Common myeloid progenitor, CD34-positive (primary cell): ENCODE measurements at regions of chr1 and their contacts with region 1.

Region 1: DNA sequence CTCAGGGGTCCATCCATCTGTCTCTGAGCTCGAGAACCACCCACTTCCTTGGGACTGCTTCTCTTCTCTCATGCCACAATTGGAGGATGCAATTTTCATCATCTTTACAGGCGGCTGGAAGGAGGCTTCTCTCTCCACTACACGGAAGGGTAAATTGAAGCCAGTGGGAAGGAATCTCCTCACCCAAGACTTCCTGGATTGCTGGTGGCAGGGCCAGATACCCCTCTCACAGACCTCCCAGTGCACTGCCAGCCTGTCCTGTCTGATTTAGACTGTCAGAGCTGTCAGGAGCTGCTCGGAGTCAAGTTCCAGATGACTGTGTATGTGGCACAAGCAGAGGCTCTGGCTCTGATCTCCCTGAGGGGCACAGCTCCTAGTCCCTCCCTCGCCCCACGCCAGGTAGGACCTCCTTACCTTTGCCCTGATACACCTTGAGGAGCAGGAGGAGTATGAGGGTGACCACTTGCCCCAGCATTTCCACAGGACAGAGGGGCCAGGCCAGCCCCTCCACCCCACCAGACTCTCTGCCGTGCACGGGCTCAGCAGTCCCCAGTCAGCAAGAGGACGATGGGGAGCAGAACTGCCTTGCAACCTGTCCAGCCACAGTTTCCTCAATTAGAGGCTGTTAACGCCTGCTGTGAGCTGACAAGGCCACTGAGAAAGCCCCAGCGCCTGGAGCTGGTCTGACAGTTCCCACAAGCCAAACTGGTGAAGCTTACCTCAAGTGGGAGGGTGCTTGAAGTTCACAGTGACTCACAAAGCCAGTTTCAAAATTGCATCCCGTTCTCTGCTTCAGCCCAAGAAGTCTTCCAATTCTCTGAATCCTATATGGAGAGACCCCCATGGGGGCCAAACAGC is at the start of gene CD244:
- DNase-seq: peak; percentile 89 to 99 (median 98)
- H3K4me3 ChIP-seq: peak within 1 kb of the TSS; percentile 19 to 74 (median 64)
- H3K27ac ChIP-seq: peak within 1 kb of the TSS; percentile 71 to 89
- H3K4me1 ChIP-seq: peaks cover 22 to 72% (median 68%) of the 10 kb centered on the region in 4 experiments
- H3K27me3 ChIP-seq: no peaks in the 10 kb centered on the region

Region 2: DNA sequence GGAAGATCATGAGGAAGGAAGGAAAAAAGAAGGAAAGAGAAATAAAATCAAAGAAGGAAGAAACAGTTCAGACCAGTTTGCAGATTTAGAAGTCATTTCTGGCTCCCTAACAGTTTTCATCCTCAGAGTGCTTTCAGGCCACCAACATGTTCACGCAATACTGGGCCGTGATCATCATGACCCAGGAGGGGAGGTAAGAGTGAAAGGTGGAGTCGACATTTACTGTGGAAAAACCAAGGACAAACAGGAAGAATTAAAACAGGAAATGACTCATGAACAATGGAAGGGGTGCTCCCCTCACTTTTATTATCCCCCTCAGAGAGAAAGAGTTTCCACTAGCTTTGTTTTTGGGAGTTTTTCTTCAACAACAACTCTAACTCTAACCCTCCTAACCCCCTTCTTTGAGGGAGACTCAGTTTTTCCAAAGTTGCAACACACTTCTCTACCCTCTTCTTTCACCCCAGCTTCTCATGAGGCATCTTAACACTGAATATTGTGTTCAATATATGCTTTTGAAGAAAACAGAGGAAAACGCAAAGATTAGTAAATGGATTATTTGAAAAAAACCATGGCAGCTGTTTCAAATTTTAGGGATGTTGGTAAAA is 401.6 kb before region 1 on chr1:
- CTCF ChIA-PET with region 1: no interaction called
- POLR2A ChIA-PET with region 1: no interaction called
- DNase-seq: peak in 1 of 3 donors; percentile 15
- H3K4me3 ChIP-seq: peak overlapping the region in 1 of 7 experiments; percentile 3
- H3K27ac ChIP-seq: no peak overlapping the region
- H3K4me1 ChIP-seq: peaks cover 0 to 11% (median 6%) of the 10 kb centered on the region in 4 experiments
- H3K27me3 ChIP-seq: no peaks in the 10 kb centered on the region

Region 3: DNA sequence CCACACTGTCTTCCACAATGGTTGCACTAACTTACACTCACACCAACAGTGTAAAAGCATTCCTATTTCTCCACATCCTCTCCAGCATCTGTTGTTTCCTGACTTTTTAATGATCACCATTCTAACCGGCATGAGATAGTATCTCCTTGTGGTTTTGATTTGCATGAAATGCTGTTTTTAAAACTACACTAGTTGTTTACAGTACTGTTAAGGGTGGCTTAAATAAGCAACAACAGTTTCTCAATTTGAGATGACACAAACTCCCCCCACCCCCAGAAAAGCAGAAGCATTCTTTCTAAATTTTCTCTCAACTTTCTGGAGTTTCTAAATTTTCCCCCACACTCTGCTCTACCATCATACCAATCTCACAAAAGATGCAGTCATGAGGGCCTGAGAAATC is 130.4 kb before region 1 on chr1:
- CTCF ChIA-PET with region 1: no interaction called
- POLR2A ChIA-PET with region 1: no interaction called
- DNase-seq: no peak
- H3K4me3 ChIP-seq: no peak overlapping the region
- H3K27ac ChIP-seq: no peak overlapping the region
- H3K4me1 ChIP-seq: peaks cover 0 to 4% (median 1%) of the 10 kb centered on the region in 4 experiments
- H3K27me3 ChIP-seq: no peaks in the 10 kb centered on the region

Region 4: DNA sequence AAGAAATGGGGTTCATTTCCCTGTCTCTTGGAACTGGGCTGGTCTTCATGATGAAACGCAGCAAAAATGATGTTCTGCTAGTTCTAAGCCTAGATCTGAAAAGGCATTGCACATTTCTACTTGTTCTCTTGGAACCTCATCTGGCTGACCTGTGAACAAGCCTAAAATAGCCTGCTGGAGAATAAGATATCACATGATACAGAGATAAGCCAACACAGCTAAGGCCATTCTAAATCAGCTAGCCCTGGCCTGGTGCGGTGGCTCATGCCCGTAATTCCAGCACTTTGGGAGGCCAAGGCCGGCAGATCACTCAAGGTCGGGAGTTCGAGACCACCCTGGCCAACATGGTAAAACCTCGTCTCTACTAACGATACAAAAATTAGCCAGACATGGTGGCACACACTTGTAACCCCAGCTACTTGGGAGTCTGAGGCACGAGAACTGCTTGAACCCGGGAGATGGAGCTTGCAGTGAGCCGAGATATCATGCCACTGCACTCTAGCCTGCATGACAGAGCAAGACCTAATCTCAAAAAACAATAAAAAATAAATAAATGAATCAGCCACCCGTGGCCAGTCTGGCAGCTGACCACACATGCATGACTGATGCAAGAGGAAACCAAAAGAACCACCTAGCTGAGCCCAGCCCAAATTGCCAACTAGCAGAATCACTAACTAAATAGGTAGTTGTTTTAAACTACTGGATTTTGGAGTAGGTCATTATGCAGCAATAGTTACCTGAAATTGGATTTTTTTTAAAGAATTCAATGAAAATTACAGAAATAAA is 17.8 kb before region 1 on chr1:
- CTCF ChIA-PET with region 1: interaction called, 385 read pairs
- POLR2A ChIA-PET with region 1: interaction called, 16 read pairs
- DNase-seq: peak; percentile 66 to 86 (median 83)
- H3K4me3 ChIP-seq: peak overlapping the region in 2 of 7 experiments; percentile 4 to 22
- H3K27ac ChIP-seq: peak overlapping the region in 1 of 2 experiments; percentile 46
- H3K4me1 ChIP-seq: peaks cover 33 to 68% (median 57%) of the 10 kb centered on the region in 4 experiments
- H3K27me3 ChIP-seq: no peaks in the 10 kb centered on the region

Region 5: DNA sequence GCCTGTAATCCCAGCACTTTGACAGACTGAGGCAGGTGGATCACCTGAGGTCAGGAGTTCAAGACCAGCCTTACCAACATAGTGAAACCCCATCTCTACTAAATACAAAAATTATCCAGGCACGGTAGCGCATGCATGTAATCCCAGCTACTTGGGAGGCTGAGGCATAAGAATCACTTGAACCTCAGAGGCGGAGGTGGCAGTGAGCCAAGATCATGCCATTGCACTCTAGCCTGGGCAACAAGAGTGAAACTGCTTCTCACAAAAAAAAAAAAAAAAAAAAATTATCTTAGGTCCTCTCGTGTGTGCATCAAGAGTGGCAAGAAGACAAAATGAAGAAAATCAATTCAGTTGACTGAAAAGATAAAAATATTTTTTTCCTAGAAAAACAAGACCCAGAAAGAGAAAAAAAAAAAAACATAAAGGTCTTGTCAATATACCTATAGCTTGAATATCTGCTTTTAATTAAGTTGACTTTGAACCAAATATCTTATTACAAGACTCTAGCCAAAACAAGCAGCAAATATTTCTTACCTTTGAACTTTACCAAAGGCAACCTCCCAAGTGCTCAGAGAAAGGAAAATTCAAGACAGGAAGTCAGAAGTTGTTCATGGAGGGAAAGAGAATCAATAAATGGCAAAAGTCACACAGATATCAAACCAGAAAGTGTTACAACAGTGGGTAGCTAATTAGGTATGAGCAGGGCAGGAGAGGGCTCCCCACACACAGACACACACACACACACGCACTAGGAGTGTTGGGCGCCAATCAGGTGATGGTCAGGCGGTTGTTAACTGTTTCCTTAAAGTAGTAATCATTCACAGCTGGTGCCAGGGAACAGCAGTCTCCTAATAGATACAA is 62.6 kb after region 1 on chr1:
- CTCF ChIA-PET with region 1: no interaction called
- POLR2A ChIA-PET with region 1: no interaction called
- DNase-seq: no peak
- H3K4me3 ChIP-seq: no peak overlapping the region
- H3K27ac ChIP-seq: no peak overlapping the region
- H3K4me1 ChIP-seq: no peaks in the 10 kb centered on the region
- H3K27me3 ChIP-seq: no peaks in the 10 kb centered on the region